ENCODE measurements at regions of chr3 and their contacts with region 1.

Region 1: DNA sequence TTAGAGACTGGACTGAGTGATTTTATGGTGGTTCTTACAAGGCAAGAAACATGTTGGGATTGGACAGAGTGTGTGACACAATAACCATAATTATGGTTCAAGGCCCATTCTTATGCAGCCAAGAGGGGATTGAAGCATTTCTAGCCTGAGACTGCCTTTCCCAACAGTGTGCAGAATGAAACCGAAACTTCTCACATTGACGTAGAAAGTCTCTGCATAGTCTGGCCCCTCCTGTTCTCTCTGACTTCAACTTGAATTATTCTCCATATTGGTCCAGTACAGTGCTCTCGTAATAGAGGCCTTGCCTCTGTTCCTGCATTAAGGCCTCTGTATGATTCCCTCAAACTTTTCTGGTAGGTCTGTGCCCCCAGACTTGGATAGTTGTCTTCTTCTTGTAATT is 138.3 kb downstream of the DIPK2A start:
- DNase-seq: no peak
- ATAC-seq: peak; percentile 42
- H3K4me3 ChIP-seq: no peak overlapping the region
- H3K27ac ChIP-seq: no peak overlapping the region
- H3K4me1 ChIP-seq: peaks cover 0 to 3% of the 10 kb centered on the region in 2 donors
- H3K27me3 ChIP-seq: no peaks in the 10 kb centered on the region

Region 2: GRCh38 chr3:143314251-143315093 is 795.5 kb before region 1 on chr3:
- intact Hi-C with region 1: no loop called
- DNase-seq: no peak
- ATAC-seq: no peak
- H3K4me3 ChIP-seq: no peak overlapping the region
- H3K27ac ChIP-seq: no peak overlapping the region
- H3K4me1 ChIP-seq: peaks cover 0 to 4% of the 10 kb centered on the region in 2 donors
- H3K27me3 ChIP-seq: no peaks in the 10 kb centered on the region

Region 3: GRCh38 chr3:143935678-143936077 is 174.3 kb before region 1 on chr3:
- intact Hi-C with region 1: no loop called
- DNase-seq: no peak
- ATAC-seq: no peak
- H3K4me3 ChIP-seq: no peak overlapping the region
- H3K27ac ChIP-seq: no peak overlapping the region
- H3K4me1 ChIP-seq: no peaks in the 10 kb centered on the region
- H3K27me3 ChIP-seq: no peaks in the 10 kb centered on the region

Region 4: GRCh38 chr3:143961342-143961741 is 148.6 kb before region 1 on chr3:
- intact Hi-C with region 1: no loop called
- DNase-seq: no peak
- ATAC-seq: no peak
- H3K4me3 ChIP-seq: no peak overlapping the region
- H3K27ac ChIP-seq: no peak overlapping the region
- H3K4me1 ChIP-seq: no peaks in the 10 kb centered on the region
- H3K27me3 ChIP-seq: no peaks in the 10 kb centered on the region

Region 5: DNA sequence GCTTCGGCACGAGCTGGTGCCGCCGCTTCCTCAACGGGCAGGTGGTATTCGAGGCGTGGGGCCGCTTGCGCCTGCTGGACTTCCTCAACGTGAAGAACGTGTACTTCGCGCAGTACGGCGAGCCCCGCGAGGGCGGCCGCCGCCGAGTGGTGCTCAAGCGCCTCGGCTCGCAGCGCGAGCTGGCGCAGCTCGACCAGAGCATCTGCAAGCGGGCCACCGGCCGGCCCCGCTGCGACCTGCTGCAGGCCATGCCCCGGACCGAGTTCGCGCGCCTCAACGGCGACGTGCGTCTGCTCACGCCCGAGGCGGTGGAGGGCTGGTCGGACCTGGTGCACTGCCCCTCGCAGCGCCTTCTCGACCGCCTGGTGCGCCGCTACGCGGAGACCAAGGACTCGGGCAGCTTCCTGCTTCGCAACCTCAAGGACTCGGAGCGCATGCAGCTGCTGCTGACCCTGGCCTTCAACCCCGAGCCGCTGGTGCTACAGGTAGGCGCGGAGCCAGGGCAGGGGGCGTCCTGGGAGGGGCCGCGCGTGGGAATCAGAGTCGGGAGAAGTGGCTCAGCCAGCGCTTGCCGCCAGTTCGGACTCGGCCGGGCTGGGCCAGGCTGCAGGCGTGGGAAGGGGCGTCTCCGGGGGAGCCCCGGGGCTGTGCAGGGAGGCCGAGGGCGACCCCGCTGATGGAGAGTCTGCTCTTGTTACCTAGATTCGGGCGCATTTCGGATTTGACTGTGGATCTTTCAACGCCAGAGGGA is 137.3 kb before region 1 on chr3:
- intact Hi-C with region 1: loop called in 1 of 2 experiments (anchors 10 kb)
- DNase-seq: peak; percentile 89 to 90
- ATAC-seq: peak; percentile 70
- H3K4me3 ChIP-seq: peak overlapping the region; percentile 73 to 85
- H3K27ac ChIP-seq: peak overlapping the region in 1 of 2 donors; percentile 98
- H3K4me1 ChIP-seq: peaks cover 0 to 1% of the 10 kb centered on the region in 2 donors
- H3K27me3 ChIP-seq: no peaks in the 10 kb centered on the region

Region 6: DNA sequence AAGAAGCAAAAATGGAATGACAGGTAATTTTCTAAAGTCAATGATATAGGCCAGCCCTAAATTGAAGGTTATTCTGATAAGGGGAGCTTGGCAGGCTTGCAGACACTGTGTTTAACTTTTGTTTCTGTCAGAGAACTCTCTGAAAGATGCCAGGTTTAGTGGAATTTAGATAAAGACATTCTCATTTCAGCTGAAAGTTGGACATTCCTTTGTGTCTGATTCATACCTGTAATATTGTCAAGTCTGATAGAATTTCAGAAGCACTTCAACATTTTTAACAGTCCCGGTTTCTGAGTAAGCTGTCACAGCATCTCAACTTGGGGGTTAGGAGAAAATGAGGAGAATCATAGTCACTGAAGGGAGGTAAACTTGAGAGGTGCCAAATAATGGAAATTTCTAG is 54.3 kb before region 1 on chr3:
- intact Hi-C with region 1: loop called in 1 of 2 experiments (anchors 5 kb)
- DNase-seq: no peak
- ATAC-seq: no peak
- H3K4me3 ChIP-seq: no peak overlapping the region
- H3K27ac ChIP-seq: no peak overlapping the region
- H3K4me1 ChIP-seq: peaks cover 0 to 3% of the 10 kb centered on the region in 2 donors
- H3K27me3 ChIP-seq: no peaks in the 10 kb centered on the region

Region 7: GRCh38 chr3:144470666-144471065 is 360.7 kb after region 1 on chr3:
- intact Hi-C with region 1: no loop called
- DNase-seq: no peak
- ATAC-seq: no peak
- H3K4me3 ChIP-seq: no peak overlapping the region
- H3K27ac ChIP-seq: no peak overlapping the region
- H3K4me1 ChIP-seq: no peaks in the 10 kb centered on the region
- H3K27me3 ChIP-seq: no peaks in the 10 kb centered on the region

Measured in aorta (tissue), 5 donors.